Psoas muscle (tissue), 8 donors: ENCODE measurements at regions of chr1 and their contacts with region 1.

Region 1: GRCh38 chr1:171801487-171801891 is 20.0 kb downstream of the METTL13 start:
- DNase-seq: no peak
- ATAC-seq: peak; percentile 51 to 80 (median 66)
- H3K4me3 ChIP-seq: no peak overlapping the region
- H3K27ac ChIP-seq: no peak overlapping the region
- H3K4me1 ChIP-seq: no peaks in the 10 kb centered on the region
- H3K27me3 ChIP-seq: no peaks in the 10 kb centered on the region
- CTCF ChIP-seq: peak; percentile 71

Region 2: GRCh38 chr1:171841050-171841940 is 39.8 kb after region 1 on chr1 and contains the start of gene DNM3:
- intact Hi-C with region 1: loop called in 1 of 2 experiments (anchors 5 kb)
- DNase-seq: peak; percentile 84 to 89
- ATAC-seq: peak; percentile 96 to 99 (median 98)
- H3K4me3 ChIP-seq: peak within 1 kb of the TSS; percentile 78
- H3K27ac ChIP-seq: peak within 1 kb of the TSS; percentile 56
- H3K4me1 ChIP-seq: no peaks in the 10 kb centered on the region
- H3K27me3 ChIP-seq: no peaks in the 10 kb centered on the region
- CTCF ChIP-seq: no peak
- total RNA-seq, gene DNM3: 0.52 to 1.0 (median 0.89) TPM

Region 3: DNA sequence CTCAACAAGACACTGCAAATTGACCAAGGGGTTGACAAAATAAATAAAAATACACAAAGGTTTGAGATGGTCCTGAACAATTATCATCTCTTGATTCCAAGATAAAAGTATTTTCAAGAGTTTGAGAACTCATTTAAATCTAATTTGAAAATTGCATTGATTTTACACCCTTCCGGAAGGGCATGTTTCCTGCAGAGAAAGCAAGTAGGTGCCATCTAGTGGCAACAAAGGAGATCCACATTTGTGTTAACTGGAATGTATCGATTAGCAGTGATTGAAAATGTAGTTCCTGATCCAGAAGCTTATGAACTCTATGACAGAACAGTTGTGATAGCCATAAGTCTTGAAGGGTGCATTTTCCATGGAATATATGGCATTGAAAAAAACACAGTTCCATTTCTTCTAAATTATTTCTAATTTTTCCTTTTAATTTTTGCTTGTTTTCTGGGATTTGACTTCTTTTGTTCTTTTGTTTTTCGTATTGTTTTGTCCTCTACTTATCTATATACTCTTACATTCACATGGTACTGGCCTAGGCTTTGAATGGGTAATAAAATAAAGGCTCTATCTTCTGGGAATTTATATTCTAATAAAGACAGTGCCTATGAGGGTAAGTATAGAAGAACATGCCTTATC is 183.5 kb after region 1 on chr1:
- intact Hi-C with region 1: loop called (anchors 2 kb)
- DNase-seq: no peak
- ATAC-seq: peak in 1 of 4 donors; percentile 83
- H3K4me3 ChIP-seq: no peak overlapping the region
- H3K27ac ChIP-seq: no peak overlapping the region
- H3K4me1 ChIP-seq: peaks cover 6% of the 10 kb centered on the region
- H3K27me3 ChIP-seq: no peaks in the 10 kb centered on the region
- CTCF ChIP-seq: peak; percentile 82